Common myeloid progenitor, CD34-positive (primary cell): ENCODE measurements at regions of chr10 and their contacts with region 1.

Region 1: GRCh38 chr10:97553575-97554031 is 19.0 kb upstream of the ANKRD2 start:
- DNase-seq: peak; percentile 45 to 56 (median 50)
- H3K4me3 ChIP-seq: no peak overlapping the region
- H3K27ac ChIP-seq: no peak overlapping the region
- H3K4me1 ChIP-seq: no peaks in the 10 kb centered on the region
- H3K27me3 ChIP-seq: no peaks in the 10 kb centered on the region

Region 2: DNA sequence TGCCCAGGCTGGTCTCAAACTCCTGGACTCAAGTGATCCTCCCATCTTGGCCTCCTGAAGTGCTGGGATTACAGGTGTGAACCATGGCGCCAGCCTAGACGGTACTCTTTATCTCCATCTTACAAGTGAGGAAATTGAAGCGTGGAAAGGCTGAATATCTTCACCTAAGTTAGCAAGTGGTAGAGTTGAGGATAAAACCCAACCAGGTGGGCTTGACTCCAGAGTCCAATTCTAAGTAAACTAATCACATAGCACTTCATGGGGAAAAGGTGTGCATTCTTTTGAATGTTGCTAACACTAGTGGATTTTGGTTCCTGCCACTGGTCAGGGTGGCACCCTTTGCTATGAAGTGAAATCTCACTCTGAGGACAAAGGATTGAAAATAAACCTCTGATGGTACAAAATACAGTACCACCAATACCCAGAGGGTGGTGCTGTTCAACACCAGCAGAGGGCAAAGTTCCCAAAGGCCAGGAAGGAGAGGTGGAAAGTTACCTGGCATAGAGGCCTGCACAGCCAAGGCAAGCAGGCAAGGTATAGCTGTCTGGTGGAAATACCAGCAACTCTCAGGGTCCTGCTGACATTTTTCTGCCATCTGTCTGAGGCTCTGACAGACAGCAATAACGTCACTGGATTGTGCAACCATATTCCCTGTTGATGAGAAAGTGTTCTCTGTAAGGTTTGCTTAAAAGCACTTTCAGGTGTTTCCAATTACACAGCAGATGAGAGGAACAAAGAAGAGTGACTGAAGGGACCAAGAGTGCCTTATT is 90.1 kb before region 1 on chr10:
- CTCF ChIA-PET with region 1: interaction called, 59 read pairs
- POLR2A ChIA-PET with region 1: no interaction called
- DNase-seq: peak; percentile 42 to 56 (median 42)
- H3K4me3 ChIP-seq: no peak overlapping the region
- H3K27ac ChIP-seq: no peak overlapping the region
- H3K4me1 ChIP-seq: no peaks in the 10 kb centered on the region
- H3K27me3 ChIP-seq: no peaks in the 10 kb centered on the region

Region 3: GRCh38 chr10:97543025-97543575 is 10.5 kb before region 1 on chr10:
- CTCF ChIA-PET with region 1: interaction called, 148 read pairs
- POLR2A ChIA-PET with region 1: no interaction called
- DNase-seq: peak; percentile 71 to 86 (median 81)
- H3K4me3 ChIP-seq: peak overlapping the region in 3 of 7 experiments; percentile 11 to 57 (median 33)
- H3K27ac ChIP-seq: peak overlapping the region in 1 of 2 experiments; percentile 57
- H3K4me1 ChIP-seq: peaks cover 0 to 30% (median 24%) of the 10 kb centered on the region in 4 experiments
- H3K27me3 ChIP-seq: no peaks in the 10 kb centered on the region

Region 4: GRCh38 chr10:97572214-97572989 is 18.8 kb after region 1 on chr10 and contains the start of gene ANKRD2:
- CTCF ChIA-PET with region 1: interaction called, 18 read pairs
- POLR2A ChIA-PET with region 1: interaction called, 3 read pairs
- DNase-seq: peak; percentile 67 to 85 (median 80)
- H3K4me3 ChIP-seq: no peak within 1 kb of the TSS
- H3K27ac ChIP-seq: no peak within 1 kb of the TSS
- H3K4me1 ChIP-seq: peaks cover 0 to 1% (median 0%) of the 10 kb centered on the region in 4 experiments
- H3K27me3 ChIP-seq: peaks cover 0 to under 1% (median 0%) of the 10 kb centered on the region in 5 experiments